A549 (cell line): ENCODE measurements at regions of chr5 and their contacts with region 1.

Region 1: GRCh38 chr5:270340-270739 is 1.1 kb upstream of the PDCD6 start:
- DNase-seq: no peak
- ATAC-seq: no peak
- H3K4me3 ChIP-seq: peak overlapping the region; percentile 53
- H3K27ac ChIP-seq: peak overlapping the region; percentile 79 to 84
- H3K4me1 ChIP-seq: peaks cover 14% of the 10 kb centered on the region; the same call in 2 of the 3 replicates
- CTCF ChIP-seq: no peak
- EP300 ChIP-seq: no peak
- POLR2A ChIP-seq: no peak
- RAD21 ChIP-seq: no peak

Region 2: DNA sequence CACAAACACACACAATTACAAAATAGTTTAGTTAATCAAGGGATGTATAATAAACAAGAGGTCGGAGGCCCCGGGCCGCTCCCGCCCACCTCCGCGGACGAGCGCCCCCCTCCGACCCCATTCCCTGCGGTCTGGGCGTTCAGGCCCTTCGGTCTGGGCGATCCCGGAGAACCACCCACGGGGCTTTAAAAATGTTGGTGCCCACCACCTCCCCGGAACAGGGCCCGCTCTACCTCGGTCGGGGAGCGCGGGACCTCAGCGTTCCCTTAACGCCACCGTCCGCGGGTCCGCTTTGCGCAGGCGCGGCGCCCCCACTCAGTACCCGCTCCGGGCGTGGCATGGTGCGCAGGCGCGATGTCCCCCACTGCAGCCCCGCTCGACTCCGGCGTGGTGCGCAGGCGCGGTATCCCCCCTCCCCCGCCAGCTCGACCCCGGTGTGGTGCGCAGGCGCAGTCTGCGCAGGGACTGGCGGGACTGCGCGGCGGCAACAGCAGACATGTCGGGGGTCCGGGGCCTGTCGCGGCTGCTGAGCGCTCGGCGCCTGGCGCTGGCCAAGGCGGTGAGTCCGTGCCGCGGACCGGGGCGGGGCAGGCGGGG is 52.4 kb before region 1 on chr5 and contains the starts of genes CCDC127 and SDHA:
- CTCF ChIA-PET with region 1: no interaction called
- POLR2A ChIA-PET with region 1: interaction called, 11 read pairs
- DNase-seq: peak; percentile 91 to 99
- ATAC-seq: peak; percentile 88 to 94
- H3K4me3 ChIP-seq: peak within 1 kb of the TSS; percentile 99
- H3K27ac ChIP-seq: peak within 1 kb of the TSS; percentile 85 to 97
- H3K4me1 ChIP-seq: peaks cover 20% of the 10 kb centered on the region
- CTCF ChIP-seq: peak; percentile 60
- EP300 ChIP-seq: no peak
- POLR2A ChIP-seq: peak; percentile 80
- RAD21 ChIP-seq: no peak
- polyA plus RNA-seq, gene CCDC127: 5.1 and 5.2 TPM in 2 replicates
- polyA plus RNA-seq, gene SDHA: 115 and 122 TPM in 2 replicates

Region 3: GRCh38 chr5:285639-286557 is 15.6 kb after region 1 on chr5:
- CTCF ChIA-PET with region 1: no interaction called
- POLR2A ChIA-PET with region 1: interaction called, 20 read pairs
- DNase-seq: no peak
- ATAC-seq: no peak
- H3K4me3 ChIP-seq: no peak overlapping the region
- H3K27ac ChIP-seq: no peak overlapping the region
- H3K4me1 ChIP-seq: no peaks in the 10 kb centered on the region
- CTCF ChIP-seq: no peak
- EP300 ChIP-seq: no peak
- POLR2A ChIP-seq: no peak
- RAD21 ChIP-seq: no peak

Region 4: DNA sequence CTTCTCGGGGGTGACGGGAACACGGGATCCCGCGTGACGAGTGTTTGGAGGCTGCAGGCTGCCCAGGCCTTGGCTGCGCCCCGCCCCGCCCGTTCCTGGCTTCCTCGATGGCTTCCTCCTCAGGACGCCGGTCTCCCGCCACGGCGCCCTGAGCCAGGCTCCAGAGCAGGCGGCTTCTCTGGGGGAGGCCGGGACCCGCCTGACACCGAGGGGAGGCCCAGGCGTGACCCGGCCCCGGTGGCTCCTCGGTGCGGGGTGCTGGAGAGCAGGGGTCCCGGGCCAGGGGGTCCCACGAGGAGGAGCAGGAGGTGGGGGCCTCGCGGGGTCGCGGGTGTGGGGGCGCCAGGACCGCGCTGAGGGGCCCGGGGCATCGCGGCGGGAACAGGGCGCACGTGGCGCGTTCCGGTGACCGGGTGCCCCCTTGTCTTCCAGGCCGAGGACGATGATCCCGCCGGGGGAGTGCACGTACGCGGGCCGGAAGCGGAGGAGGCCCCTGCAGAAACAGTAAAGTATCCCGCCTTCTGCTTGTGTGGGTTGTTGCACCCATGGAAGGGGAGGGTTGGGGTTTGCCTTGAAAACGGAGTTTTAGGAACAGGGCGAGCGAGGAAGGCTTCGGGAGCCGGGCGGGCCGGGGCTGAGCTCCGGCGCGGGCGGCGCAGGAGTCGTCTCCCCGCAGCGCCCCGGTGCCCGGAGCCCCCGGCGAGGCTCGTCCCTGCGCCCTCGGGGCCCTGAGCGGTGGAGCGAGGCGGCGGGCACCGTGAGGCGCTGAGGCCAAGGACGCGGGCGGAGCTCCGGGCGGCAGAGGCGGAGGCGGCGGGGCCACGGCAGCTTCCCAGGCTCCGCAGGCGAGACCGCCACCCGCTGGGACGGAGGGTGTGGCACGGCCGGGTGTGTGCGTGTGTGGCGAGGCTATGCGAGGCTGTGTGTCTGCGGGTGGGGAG is 73.4 kb after region 1 on chr5:
- CTCF ChIA-PET with region 1: no interaction called
- POLR2A ChIA-PET with region 1: no interaction called
- DNase-seq: peak; percentile 62 to 82
- ATAC-seq: peak; percentile 86 to 92
- H3K4me3 ChIP-seq: peak overlapping the region; percentile 57
- H3K27ac ChIP-seq: peak overlapping the region; percentile 80 to 97
- H3K4me1 ChIP-seq: peaks cover 3% of the 10 kb centered on the region; the same call in 1 of the 3 replicates
- CTCF ChIP-seq: no peak
- EP300 ChIP-seq: no peak
- POLR2A ChIP-seq: no peak; the same call in 1 of the 2 replicates
- RAD21 ChIP-seq: no peak

Region 5: GRCh38 chr5:424301-425110 is 154.2 kb after region 1 on chr5:
- CTCF ChIA-PET with region 1: no interaction called
- POLR2A ChIA-PET with region 1: no interaction called
- DNase-seq: no peak
- ATAC-seq: no peak
- H3K4me3 ChIP-seq: no peak overlapping the region
- H3K27ac ChIP-seq: peak overlapping the region in 1 of 2 experiments; percentile 56; a peak in 1 of 6 replicates
- H3K4me1 ChIP-seq: 0 out of 3 replicates have a peak, but pooled peaks cover 5% of the 10 kb centered on the region
- CTCF ChIP-seq: no peak
- EP300 ChIP-seq: no peak
- POLR2A ChIP-seq: no peak
- RAD21 ChIP-seq: no peak

Region 6: GRCh38 chr5:633501-633955 is 363.2 kb after region 1 on chr5:
- CTCF ChIA-PET with region 1: no interaction called
- POLR2A ChIA-PET with region 1: no interaction called
- DNase-seq: peak in 1 of 2 experiments; percentile 37
- ATAC-seq: peak; percentile 79 to 85
- H3K4me3 ChIP-seq: no peak overlapping the region
- H3K27ac ChIP-seq: no peak overlapping the region
- H3K4me1 ChIP-seq: no peaks in the 10 kb centered on the region
- CTCF ChIP-seq: no peak
- EP300 ChIP-seq: no peak
- POLR2A ChIP-seq: no peak
- RAD21 ChIP-seq: no peak